Left ventricle myocardium superior (tissue), 1 donor: ENCODE measurements at regions of chr2 and their contacts with region 1.

Region 1: GRCh38 chr2:220394433-220394832 is 767.0 kb downstream of the SLC4A3 start:
- DNase-seq: peak; percentile 60
- ATAC-seq: peak; percentile 69

Region 2: GRCh38 chr2:219758907-219759680 is 635.3 kb before region 1 on chr2:
- intact Hi-C with region 1: loop called (anchors 5 kb)
- DNase-seq: no peak
- ATAC-seq: peak; percentile 65

Region 3: DNA sequence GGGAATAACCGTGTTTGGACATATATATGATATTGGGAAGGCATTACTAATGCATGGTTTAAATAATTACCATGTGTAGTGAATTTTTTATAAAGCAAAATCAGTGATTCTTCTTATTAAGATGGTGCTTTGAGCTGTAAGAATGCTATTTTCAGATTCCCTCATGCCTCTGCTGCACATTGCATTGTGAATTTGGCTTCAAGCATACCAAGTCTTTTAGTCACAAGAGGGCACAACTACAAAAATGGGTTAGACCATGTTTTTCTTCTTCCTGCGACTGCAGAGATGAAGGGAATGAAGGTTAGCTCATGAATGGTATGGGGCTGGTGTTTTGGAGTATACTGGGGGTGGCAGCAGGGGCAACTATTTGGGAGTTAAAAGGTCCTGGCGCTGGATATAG is 446.9 kb before region 1 on chr2:
- intact Hi-C with region 1: no loop called
- DNase-seq: no peak
- ATAC-seq: no peak